Ovary (tissue), 10 donors: ENCODE measurements at regions of chr21 and their contacts with region 1.

Region 1: DNA sequence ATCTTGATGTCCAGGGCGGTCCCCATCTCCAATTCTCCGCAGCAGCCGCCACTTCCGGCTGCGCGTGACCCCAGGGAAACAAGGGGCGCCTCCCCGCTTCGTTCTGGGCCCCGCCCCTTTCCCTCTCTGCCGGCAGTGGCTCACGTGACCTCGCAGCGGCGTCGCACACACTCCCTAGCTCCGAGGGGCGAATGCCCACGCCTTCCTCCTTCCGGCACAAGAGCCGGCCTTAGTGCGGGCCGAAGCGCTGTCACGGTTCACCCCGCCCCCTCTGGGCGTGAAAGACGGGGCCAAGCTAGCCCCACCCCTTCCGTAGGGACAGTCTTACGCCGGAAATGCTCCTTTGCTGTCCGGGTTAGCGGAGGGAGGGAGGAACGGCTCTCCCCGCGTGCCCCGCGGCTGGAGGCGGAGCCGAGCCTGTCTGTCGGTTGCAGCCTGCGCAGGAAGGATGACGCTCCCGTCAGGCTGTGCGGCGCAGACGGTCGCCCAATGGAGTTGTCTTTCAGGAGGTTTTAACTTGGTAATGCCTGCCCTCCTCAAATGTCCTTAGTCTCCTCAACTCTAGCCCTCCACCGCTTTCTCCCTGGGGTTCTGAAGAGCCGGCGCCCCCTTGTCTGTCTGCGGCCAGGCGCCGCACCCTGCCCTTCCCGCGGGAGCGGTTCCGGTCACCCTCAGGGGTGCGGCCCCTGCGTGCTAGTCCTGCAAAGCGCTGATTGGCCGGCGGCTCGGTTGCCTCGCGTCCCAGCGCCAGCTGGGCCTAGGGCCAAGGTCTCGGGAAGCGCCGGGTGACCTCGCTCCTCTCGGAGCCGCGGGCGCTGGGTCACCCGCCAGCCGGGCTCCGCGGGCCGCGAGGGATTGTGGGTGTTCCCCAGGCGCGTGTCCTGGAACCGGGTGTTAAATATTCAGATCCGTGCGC is at the start of gene VPS26C:
- DNase-seq: peak; percentile 97 to 99 (median 98)
- H3K4me3 ChIP-seq: peak within 1 kb of the TSS; percentile 93
- H3K27ac ChIP-seq: peak within 1 kb of the TSS; percentile 90 to 99
- H3K4me1 ChIP-seq: peaks cover 4% of the 10 kb centered on the region
- H3K27me3 ChIP-seq: no peaks in the 10 kb centered on the region
- CTCF ChIP-seq: peak in 1 of 3 donors; percentile 10
- EP300 ChIP-seq: peak; percentile 71
- POLR2A ChIP-seq: peak; percentile 71
- total RNA-seq, gene VPS26C: 23.8 to 38.4 (median 33.9) TPM

Region 2: DNA sequence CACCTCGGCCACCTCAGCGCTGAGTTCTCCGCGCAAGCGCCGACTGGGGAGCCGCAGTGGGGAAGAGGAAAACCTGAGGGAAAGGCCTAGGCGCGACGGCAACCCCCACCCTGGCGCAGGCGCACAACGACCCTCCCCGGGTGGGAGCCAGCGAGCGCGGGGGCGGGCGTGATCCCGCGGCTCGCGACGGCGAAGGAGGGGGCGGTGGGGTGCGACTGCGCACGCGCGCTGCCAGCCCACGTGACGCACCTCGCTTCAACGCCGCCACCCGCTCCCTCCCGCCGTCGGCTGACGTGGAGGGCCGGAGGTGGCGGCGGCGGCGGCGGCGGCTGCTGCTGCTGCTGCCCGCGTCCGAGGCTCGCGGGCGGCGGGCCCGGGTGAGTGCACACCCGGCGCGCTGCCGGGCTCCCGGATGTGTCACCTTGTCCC is 194.5 kb before region 1 on chr21 and contains the starts of genes PIGP and TTC3:
- intact Hi-C with region 1: loop called in 2 of 4 experiments (anchors 2 to 5 kb)
- DNase-seq: peak; percentile 96 to 99 (median 98)
- H3K4me3 ChIP-seq: peak within 1 kb of the TSS; percentile 92
- H3K27ac ChIP-seq: peak within 1 kb of the TSS; percentile 92 to 97
- H3K4me1 ChIP-seq: no peaks in the 10 kb centered on the region
- H3K27me3 ChIP-seq: no peaks in the 10 kb centered on the region
- CTCF ChIP-seq: peak in 1 of 3 donors; percentile 26
- EP300 ChIP-seq: no peak
- POLR2A ChIP-seq: peak; percentile 88
- total RNA-seq, gene PIGP: 13.8 to 29.3 (median 21.0) TPM
- total RNA-seq, gene TTC3: 142 to 192 (median 157) TPM

Region 3: GRCh38 chr21:37366482-37367316 is 99.2 kb after region 1 on chr21 and contains the start of gene DYRK1A:
- intact Hi-C with region 1: loop called in 2 of 4 experiments (anchors 2 kb)
- DNase-seq: peak; percentile 99
- H3K4me3 ChIP-seq: peak within 1 kb of the TSS; percentile 99
- H3K27ac ChIP-seq: peak within 1 kb of the TSS; percentile 99 to 100
- H3K4me1 ChIP-seq: no peaks in the 10 kb centered on the region
- H3K27me3 ChIP-seq: no peaks in the 10 kb centered on the region
- CTCF ChIP-seq: peak in 1 of 3 donors; percentile 17
- EP300 ChIP-seq: peak; percentile 93
- POLR2A ChIP-seq: peak; percentile 31
- total RNA-seq, gene DYRK1A: 65.5 to 89.0 (median 77.5) TPM

Region 4: DNA sequence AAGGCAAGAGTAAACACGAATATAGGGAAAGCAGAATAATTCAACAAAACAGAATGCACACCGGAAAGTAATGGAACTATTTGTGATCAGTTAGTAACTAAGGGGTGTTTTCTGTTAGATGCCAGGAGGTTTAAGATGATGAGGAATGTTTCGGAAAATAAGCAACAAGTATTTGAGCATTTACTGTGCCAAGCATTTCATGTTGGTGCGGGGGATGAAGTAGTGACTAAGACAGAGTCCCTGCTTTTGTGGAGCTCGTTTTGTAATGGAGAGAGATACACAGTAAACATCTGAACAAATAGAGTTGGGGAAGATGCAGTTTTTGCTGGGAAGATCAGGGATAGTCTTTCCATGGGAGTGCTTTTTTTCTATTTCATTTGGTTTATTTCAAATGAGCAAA is 177.7 kb after region 1 on chr21:
- intact Hi-C with region 1: no loop called
- DNase-seq: peak in 1 of 5 donors; percentile 44
- H3K4me3 ChIP-seq: no peak overlapping the region
- H3K27ac ChIP-seq: no peak overlapping the region
- H3K4me1 ChIP-seq: peaks cover 20% of the 10 kb centered on the region
- H3K27me3 ChIP-seq: no peaks in the 10 kb centered on the region
- CTCF ChIP-seq: no peak
- EP300 ChIP-seq: no peak
- POLR2A ChIP-seq: no peak

Region 5: DNA sequence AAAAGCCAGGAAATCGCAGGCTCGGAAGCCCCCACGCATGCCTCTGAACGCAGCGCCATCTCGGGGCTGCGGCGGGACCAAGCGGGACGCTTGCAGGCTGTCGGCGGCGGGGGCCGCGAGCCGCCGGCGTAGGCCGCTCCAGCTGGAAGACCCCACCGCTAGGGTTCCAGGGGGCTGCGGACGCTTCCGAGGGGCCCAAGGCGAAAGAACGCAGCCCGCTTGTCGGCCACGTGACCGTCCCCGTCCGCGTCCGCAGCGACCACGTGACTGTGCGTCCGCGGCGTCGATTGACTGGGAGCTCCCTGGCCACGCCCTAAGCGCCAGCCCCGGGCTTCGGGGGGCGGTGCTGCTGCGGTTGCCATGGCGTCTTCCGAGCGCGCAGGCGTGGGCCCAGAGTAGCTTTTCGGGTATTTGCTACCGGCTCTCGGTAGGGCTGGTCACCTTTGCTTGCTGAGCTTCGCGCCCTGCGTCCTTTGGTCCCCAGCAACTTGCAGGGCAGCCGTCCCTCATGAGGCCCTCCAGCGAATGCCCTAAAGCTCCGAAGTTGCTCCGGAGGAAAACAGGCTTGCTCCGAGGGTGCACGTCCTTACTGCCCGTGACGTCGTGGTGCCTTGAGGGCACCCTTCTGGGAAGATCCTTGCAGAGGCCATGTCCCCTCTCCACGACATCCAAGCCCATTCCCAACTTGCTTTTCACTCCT is 296.3 kb after region 1 on chr21:
- intact Hi-C with region 1: loop called in 1 of 4 experiments (anchors 5 kb)
- DNase-seq: peak; percentile 89 to 95 (median 92)
- H3K4me3 ChIP-seq: peak overlapping the region; percentile 42
- H3K27ac ChIP-seq: peak overlapping the region; percentile 33 to 88
- H3K4me1 ChIP-seq: peaks cover 4% of the 10 kb centered on the region
- H3K27me3 ChIP-seq: no peaks in the 10 kb centered on the region
- CTCF ChIP-seq: peak in 2 of 3 donors; percentile 47 to 58
- EP300 ChIP-seq: no peak
- POLR2A ChIP-seq: peak; percentile 57